Activated CD8-positive, alpha-beta T cell treated with anti-CD3 and anti-CD28 coated beads, Interleukin-2, amount 10 ng/mL, durations not matched to agents 7 days and 5 days (primary cell): ENCODE measurements at regions of chr3 and their contacts with region 1.

Region 1: GRCh38 chr3:42190701-42191462 is 75.1 kb downstream of the CCK start:
- DNase-seq: peak; percentile 81
- ATAC-seq: peak; percentile 79
- H3K4me3 Mint-ChIP-seq: no peak overlapping the region
- H3K27ac Mint-ChIP-seq: peak overlapping the region; percentile 71
- H3K4me1 Mint-ChIP-seq: peaks cover 63% of the 10 kb centered on the region
- H3K27me3 Mint-ChIP-seq: no peaks in the 10 kb centered on the region

Region 2: DNA sequence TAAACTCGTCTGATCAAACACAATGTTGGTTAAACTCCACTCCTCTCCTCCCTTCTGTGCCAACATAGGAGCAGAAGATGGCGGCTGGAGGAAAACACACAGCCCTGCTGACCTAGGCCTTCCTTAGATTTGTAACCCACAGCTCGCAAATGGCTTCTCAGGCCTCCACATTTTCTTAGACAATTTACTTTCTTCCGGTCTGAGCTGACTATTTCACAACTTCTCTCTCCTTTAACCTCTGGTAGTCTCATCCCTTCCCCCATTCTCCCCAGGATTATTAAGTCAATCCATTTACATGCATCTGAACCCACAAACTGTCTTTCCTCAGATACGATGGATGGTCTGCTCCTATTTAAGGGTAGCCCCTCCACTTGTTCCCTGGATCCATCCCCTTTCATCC is 203.3 kb before region 1 on chr3:
- CTCF ChIA-PET with region 1: no interaction called
- POLR2A ChIA-PET with region 1: no interaction called
- DNase-seq: no peak
- ATAC-seq: no peak
- H3K4me3 Mint-ChIP-seq: no peak overlapping the region
- H3K27ac Mint-ChIP-seq: no peak overlapping the region
- H3K4me1 Mint-ChIP-seq: no peaks in the 10 kb centered on the region
- H3K27me3 Mint-ChIP-seq: peaks cover 2% of the 10 kb centered on the region

Region 3: GRCh38 chr3:42101048-42101447 is 89.8 kb before region 1 on chr3:
- CTCF ChIA-PET with region 1: interaction called, 30 read pairs
- POLR2A ChIA-PET with region 1: no interaction called
- DNase-seq: no peak
- ATAC-seq: no peak
- H3K4me3 Mint-ChIP-seq: no peak overlapping the region
- H3K27ac Mint-ChIP-seq: no peak overlapping the region
- H3K4me1 Mint-ChIP-seq: peaks cover 13% of the 10 kb centered on the region
- H3K27me3 Mint-ChIP-seq: no peaks in the 10 kb centered on the region

Region 4: DNA sequence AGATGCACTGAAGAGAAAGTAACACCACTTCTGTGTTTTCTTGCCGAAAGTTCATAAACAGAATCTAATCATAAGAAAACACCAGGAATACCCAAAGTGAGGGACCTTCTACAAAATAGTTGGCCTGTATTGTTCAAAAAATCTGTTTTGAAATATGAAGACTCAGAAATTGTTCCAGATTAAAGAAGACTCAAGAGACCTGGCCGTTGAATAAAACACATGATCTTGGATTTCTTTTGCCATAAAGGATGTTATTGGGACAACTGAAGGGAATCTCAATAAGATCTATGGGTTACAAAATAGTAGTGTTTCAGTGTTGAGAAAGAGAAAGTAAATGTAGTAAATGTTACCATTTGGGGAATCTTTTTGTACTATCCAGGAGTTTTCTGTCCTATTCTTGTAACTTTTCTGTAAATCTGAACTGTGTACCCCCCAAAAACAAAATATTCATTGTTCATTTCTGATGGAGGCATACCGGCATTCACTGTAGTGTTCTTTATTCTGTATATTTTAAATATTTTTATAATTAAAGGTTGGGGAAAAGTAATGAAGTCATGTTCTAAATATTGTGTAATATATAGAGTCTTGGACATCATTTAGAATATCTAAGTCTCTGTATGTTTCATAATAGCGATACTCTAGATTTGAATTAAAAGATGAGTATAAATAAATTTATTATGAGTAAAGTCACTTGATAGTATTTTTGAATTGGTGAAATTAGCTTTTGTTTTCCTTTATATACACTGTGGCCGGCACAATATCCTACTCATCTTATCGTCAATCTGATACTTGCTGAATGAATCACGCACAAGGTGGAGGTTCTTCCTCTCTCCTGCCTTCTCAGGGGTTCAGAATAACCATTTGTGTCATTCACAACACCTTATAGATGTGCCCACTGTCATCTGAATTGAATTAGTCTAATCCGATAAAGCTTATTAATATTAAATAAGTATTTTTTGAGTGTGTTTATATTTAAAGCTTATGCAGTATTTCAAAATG is 33.0 kb before region 1 on chr3:
- CTCF ChIA-PET with region 1: interaction called, 17 read pairs
- POLR2A ChIA-PET with region 1: no interaction called
- DNase-seq: no peak
- ATAC-seq: no peak
- H3K4me3 Mint-ChIP-seq: no peak overlapping the region
- H3K27ac Mint-ChIP-seq: no peak overlapping the region
- H3K4me1 Mint-ChIP-seq: peaks cover 40% of the 10 kb centered on the region
- H3K27me3 Mint-ChIP-seq: no peaks in the 10 kb centered on the region

Region 5: DNA sequence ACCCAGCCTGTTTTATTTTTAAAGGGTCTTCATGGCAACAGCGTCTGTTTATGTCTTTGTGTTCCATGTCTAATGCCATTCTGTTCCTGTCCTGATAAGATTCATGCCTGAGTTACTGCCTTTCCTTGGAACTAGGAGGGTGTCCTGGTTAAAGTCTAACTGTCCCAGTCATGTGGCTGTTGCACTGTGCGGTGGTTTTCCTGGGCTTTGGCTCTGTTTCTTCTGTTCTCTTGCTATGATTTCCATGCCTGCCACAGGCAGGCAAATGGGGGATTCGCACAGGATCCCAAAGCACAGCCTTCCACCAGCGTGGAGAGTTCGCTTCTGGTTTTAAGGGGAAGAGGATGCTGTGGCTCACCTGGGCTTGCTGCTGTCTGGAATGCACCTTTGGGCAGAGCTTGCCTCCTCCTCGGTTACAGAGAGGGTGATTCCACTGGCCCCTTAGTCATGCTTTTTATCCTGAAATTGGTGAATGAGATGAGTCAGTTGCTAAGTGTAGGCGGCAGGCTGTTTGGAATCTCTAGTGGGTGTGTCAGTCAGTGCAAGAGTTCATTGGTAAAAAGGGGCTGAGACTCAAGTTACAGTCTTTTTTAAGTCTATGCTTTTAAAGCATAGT is 11.7 kb before region 1 on chr3:
- CTCF ChIA-PET with region 1: interaction called, 39 read pairs
- POLR2A ChIA-PET with region 1: no interaction called
- DNase-seq: no peak
- ATAC-seq: no peak
- H3K4me3 Mint-ChIP-seq: no peak overlapping the region
- H3K27ac Mint-ChIP-seq: peak overlapping the region; percentile 27
- H3K4me1 Mint-ChIP-seq: peaks cover 20% of the 10 kb centered on the region
- H3K27me3 Mint-ChIP-seq: no peaks in the 10 kb centered on the region

Region 6: DNA sequence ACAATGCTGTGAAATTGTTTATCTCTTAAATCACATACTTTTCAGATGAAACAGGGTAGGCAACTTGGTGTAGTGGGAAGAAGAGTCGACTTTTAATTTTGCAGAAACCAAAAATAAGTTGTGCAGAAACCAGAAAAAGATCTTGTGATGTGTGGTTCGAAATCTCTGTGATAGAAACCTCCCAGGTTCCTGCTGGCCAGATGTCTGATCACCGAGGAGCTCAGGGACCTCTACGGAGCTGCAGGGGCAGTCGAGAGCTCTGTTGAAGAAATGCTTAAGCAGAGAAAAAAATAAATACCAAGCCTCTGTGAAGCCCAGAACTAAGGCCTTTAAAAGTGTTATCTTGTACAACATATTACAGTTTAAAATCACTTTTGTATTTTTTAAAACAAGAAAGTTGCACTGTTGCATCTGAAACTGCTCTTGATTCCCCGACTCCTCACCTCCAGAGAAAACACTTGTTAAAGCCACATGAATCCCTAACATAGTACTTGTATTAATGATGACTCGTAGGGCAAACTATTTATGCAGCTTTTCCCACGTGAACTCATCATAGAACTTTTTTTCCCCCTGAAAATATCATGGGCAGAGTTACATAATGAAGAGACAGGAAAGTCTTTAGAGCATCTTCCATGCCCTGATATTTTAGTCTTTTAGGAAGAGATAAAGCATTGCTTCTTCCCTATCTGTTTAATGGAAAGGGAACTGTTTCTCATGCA is 23.8 kb after region 1 on chr3:
- CTCF ChIA-PET with region 1: interaction called, 33 read pairs
- POLR2A ChIA-PET with region 1: no interaction called
- DNase-seq: no peak
- ATAC-seq: no peak
- H3K4me3 Mint-ChIP-seq: no peak overlapping the region
- H3K27ac Mint-ChIP-seq: peak overlapping the region; percentile 60
- H3K4me1 Mint-ChIP-seq: peaks cover 58% of the 10 kb centered on the region
- H3K27me3 Mint-ChIP-seq: no peaks in the 10 kb centered on the region

Region 7: GRCh38 chr3:42236611-42237010 is 45.7 kb after region 1 on chr3:
- CTCF ChIA-PET with region 1: no interaction called
- POLR2A ChIA-PET with region 1: no interaction called
- DNase-seq: no peak
- ATAC-seq: no peak
- H3K4me3 Mint-ChIP-seq: no peak overlapping the region
- H3K27ac Mint-ChIP-seq: no peak overlapping the region
- H3K4me1 Mint-ChIP-seq: no peaks in the 10 kb centered on the region
- H3K27me3 Mint-ChIP-seq: peaks cover 25% of the 10 kb centered on the region

Region 8: DNA sequence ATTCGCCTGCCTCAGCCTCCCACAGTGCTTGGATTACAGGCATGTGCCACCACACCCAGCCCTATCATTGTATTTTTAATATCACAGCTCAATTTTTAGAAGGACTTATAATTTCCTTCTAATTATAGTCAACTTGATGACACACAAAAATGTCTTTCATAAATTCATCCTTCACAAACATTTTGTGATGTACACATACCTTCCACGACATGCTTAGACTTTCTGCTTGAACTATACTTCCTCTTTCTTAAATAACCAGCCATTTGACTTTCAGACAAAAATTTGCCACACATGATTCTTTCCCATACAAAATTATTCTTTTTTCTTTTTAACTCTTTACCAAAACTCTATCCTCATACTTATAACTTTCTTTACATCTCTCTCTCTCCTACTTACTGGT is 123.5 kb after region 1 on chr3:
- CTCF ChIA-PET with region 1: no interaction called
- POLR2A ChIA-PET with region 1: no interaction called
- DNase-seq: no peak
- ATAC-seq: no peak
- H3K4me3 Mint-ChIP-seq: no peak overlapping the region
- H3K27ac Mint-ChIP-seq: no peak overlapping the region
- H3K4me1 Mint-ChIP-seq: no peaks in the 10 kb centered on the region
- H3K27me3 Mint-ChIP-seq: peaks cover 3% of the 10 kb centered on the region